Right ventricle myocardium inferior (tissue), 1 donor: ENCODE measurements at regions of chr12 and their contacts with region 1.

Region 1: DNA sequence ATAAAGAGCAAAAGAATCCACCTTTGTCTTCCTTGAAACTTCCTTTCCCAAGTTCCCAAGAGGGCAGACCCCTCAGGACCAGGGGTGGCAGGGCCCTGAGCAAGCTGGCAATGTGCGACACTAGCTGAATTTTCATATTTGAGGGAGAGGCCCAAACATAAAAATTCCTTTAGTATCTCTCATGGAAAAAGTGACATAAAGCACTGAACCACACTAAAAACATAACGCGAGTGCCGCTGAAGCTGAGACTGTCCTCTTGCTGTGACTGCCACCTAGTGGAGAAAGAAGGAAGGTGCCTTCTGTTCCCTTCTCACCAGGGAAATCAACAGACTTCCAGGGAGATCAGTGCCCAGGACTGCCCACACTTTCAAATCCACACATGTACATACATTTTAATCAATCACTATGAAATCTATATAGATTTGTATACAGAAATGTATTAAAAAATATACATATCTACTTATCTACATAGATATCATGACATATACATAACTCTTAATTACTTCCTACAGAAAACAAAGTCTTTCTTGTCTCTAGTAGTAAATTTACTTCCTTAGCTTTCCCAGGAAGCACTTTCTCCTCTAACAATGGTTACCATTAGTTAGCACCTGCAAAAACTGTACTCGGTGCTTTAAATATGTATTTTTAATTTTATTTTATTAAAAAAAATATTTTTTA is 53.8 kb downstream of the SSH1 start:
- DNase-seq: no peak
- ATAC-seq: peak; percentile 69

Region 2: GRCh38 chr12:108090107-108090899 is 713.3 kb before region 1 on chr12:
- intact Hi-C with region 1: no loop called
- DNase-seq: no peak
- ATAC-seq: no peak

Region 3: GRCh38 chr12:108562348-108563135 is 241.0 kb before region 1 on chr12 and contains the start of gene ISCU:
- intact Hi-C with region 1: loop called (anchors 2 kb)
- DNase-seq: peak; percentile 98
- ATAC-seq: peak; percentile 91
- total RNA-seq, gene ISCU: 444 TPM

Region 4: GRCh38 chr12:108664338-108665258 is 139.0 kb before region 1 on chr12:
- intact Hi-C with region 1: loop called (anchors 1 kb)
- DNase-seq: peak; percentile 77
- ATAC-seq: peak; percentile 91

Region 5: DNA sequence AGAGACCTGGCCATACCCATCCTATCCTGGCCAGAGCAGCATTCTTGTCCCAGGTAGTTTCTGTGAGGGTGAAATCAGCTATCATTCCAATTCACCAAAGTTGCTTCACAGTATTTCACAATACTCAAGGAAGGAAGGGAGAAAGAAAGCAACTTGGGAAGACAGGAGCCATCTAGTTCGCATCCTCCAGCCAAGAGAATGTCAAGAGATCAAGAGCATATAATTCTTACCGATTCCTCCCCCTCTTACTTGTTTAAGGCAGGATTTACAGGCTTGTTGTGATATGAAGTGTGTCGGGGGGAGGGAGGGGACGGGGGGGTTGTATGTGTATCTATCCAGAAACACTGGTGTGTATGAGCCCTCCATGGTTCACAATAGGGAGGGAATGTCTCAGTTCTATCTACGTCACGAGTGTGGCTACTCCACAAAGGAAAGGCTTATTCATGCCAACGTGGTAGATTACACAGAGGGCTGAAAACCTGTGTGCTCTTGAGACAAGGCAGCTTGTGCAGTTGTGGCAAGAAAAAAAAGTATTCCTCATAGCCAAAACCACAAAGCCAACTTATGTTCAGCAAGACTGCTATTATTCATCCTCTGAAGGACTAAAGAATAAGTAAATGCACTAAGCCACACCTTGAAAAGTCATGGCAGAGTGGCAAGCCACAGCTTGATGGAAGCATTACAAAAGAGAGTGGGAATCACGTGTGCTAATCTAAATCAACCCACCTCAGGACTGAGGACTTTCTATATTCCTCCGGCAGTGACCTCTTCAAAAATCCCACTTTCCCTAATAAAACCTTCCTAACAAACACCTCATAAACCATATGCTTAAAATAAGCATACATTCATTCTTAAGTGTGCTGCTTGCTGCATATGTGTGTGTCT is 107.2 kb before region 1 on chr12:
- intact Hi-C with region 1: no loop called
- DNase-seq: no peak
- ATAC-seq: no peak

Region 6: DNA sequence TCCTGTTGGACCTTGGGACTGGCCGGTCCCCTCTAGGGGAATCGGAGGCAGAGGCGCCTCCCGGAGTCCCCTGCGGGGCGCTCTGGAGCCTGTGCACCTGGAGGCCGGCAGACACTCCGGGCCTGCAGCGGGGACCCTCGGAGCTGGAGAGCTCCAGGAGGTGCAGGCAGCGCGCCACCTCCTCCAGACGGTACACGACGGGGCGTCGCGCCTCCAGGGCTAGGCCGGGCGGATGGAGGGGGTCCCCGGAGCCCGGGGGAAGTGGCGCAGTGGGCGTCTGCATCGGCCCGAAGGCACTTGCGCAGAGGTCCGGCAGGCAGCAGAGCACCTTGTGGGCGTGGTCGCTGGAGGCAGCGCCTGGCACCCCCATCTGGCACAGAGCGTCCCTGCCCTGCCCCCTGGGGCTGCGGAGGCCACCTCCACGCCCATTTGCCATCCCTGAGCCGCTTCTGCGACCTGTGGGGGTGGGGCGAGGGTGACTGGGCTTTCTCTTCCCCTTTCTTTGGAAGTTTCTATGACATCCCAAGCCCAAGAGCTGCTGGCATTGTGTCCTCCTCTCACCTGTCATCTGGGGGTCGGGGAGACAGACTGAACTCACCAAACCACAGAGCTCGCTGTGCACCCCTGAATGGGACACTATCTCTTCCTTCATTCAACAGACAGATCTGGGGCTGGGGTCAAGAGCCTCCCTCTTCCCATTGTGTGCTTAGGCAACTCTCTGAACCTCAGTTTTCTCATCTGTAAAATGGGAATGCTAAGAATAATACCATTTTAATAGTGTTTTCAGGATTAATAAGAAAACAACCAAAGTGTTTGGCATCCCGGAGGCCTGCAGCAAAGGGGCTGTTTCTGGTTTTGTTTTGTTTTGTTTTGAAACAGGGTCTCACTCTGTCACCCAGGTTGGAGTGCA is 34.7 kb before region 1 on chr12:
- intact Hi-C with region 1: loop called (anchors 2 kb)
- DNase-seq: peak; percentile 80
- ATAC-seq: peak; percentile 41

Region 7: DNA sequence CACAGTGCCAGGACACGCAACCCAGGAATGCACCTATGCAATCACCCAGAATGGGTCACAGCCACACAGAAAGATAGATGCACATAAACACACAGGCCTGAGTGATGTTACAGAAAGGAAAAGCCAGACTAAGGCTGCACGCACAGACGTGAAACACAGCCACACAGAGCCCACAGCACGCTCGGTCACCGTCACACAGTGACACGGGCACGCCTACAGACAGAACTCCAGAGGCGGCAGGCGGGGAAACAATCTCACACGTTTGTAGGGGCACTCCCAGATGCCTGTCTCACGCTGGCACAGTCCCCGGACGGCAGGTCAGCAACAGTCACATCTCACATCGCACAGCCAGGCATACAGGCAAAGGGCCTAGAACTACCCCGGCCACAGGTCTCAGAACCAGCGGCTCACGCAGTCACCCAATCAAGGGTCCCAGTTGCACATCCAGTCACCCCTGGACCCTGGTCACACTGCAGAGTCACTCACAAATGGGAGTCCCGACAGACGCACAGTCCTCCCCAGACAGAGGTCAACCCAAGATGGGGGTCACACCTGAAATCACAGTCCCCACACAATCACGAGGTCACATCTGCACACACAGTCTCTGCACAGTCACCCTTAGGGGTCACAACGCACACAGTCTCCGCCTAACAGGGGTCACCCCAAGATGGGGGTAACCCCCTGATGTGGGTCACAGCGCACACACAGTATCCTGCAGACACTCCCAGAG is 53.0 kb after region 1 on chr12:
- intact Hi-C with region 1: loop called (anchors 2 kb)
- DNase-seq: peak; percentile 90
- ATAC-seq: peak; percentile 62

Region 8: GRCh38 chr12:108950991-108951739 is 147.6 kb after region 1 on chr12:
- intact Hi-C with region 1: loop called (anchors 5 kb)
- DNase-seq: peak; percentile 87
- ATAC-seq: peak; percentile 50